ENCODE measurements at regions of chr20 and their contacts with region 1.

Region 1: DNA sequence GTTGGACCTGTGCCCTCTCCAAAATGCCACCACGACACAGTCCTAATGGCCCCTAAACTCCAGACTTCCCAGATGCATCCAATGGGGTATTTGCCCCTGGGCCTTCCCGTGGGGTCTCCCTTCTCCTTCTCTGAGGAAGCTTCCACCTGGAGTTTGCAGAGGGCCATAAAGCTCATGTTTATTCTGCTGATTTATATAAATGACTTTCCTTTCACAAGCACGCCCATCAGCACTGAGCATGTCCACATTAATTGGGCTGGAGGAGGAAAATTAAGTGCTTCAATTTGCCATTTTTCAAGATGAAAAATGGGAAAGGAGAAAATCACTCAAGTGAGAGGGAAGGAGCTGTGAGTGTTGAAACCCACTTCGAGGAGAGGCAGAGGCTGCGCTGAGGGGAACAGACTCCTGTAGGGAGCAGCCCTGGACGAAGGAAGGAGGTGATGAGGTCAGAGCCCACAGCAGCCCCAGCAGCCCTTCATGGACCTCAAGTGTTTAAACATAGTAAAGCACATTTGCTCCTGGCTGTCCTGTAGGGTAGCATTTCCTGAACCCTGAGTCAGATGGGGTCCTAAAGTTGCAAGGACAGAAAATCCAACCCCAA is 434.9 kb upstream of the SULF2 start:
- DNase-seq: no peak
- ATAC-seq: no peak
- H3K4me3 ChIP-seq: no peak overlapping the region
- H3K27ac ChIP-seq: no peak overlapping the region
- H3K4me1 ChIP-seq: no peaks in the 10 kb centered on the region
- H3K27me3 ChIP-seq: no peaks in the 10 kb centered on the region
- CTCF ChIP-seq: no peak

Region 2: DNA sequence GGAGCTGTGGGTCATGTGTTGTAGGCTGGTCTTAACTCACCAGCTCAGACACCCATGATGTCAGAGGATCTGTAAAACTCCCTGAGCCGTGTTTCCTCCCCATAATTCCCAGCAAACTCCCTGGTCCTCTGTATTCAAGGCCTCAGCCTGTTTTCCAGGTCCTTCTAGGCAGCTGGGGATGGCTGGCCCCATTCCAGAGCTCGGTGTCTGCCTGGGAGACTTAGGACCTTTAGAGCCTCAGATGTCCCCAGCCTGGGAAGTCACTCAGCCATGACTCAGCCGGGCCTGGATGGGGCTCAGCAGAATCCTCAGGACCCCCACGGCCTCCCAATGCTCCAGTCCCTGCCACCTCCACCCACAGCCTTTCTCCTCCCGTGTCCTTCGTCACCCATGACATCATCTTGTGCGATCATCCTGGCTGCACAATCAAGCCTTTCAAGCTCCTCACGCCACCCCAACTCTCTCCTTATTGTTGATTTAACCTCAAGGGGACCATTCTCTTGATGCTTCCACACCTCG is 40.2 kb after region 1 on chr20:
- CTCF ChIA-PET with region 1: no interaction called
- POLR2A ChIA-PET with region 1: no interaction called
- intact Hi-C with region 1: no loop called
- DNase-seq: no peak
- ATAC-seq: no peak
- H3K4me3 ChIP-seq: no peak overlapping the region
- H3K27ac ChIP-seq: no peak overlapping the region
- H3K4me1 ChIP-seq: no peaks in the 10 kb centered on the region
- H3K27me3 ChIP-seq: peaks cover 86% of the 10 kb centered on the region
- CTCF ChIP-seq: no peak

Region 3: DNA sequence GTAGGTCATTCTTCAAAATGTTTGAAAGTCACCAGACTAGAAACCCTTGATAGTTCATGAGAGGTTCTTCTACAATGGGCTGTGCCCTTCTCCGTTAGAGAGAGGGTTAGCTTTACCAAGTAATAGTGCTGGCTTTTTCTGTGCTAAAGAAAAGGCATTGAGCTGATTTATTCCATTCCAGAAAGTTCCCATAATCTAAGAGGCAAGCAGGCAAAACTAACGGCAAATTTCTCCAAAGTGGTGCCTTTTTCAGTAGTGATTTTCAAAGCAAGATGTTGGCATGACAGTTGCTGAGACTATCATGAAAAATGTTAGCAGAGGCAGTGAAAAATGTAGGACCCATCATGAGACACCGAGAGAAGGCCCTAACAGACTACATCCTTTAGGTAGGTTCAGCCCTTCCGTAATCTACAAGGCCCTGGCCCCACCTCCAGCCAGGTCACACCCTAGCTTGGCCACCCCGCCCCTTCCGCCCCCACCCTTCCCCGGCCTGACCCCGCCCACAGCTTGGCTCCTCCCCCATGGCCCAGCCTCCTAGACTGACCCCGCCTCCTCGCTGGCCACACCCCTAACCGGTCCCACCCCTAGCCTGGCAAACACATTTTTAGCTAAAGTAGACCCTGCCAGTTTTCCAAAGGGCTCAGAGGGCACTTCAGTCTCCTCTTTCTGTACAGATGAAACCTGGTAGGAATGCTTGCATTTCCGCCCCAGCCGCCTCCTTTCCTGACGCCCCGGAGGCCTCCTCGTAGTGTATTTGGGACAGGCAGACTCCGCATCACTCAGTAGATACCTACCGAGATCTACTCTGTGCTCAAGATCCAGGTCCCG is 163.9 kb after region 1 on chr20:
- CTCF ChIA-PET with region 1: no interaction called
- POLR2A ChIA-PET with region 1: no interaction called
- intact Hi-C with region 1: no loop called
- DNase-seq: no peak
- ATAC-seq: no peak
- H3K4me3 ChIP-seq: no peak overlapping the region
- H3K27ac ChIP-seq: no peak overlapping the region
- H3K4me1 ChIP-seq: no peaks in the 10 kb centered on the region
- H3K27me3 ChIP-seq: no peaks in the 10 kb centered on the region; the same call in none of the 2 replicates
- CTCF ChIP-seq: no peak

Region 4: DNA sequence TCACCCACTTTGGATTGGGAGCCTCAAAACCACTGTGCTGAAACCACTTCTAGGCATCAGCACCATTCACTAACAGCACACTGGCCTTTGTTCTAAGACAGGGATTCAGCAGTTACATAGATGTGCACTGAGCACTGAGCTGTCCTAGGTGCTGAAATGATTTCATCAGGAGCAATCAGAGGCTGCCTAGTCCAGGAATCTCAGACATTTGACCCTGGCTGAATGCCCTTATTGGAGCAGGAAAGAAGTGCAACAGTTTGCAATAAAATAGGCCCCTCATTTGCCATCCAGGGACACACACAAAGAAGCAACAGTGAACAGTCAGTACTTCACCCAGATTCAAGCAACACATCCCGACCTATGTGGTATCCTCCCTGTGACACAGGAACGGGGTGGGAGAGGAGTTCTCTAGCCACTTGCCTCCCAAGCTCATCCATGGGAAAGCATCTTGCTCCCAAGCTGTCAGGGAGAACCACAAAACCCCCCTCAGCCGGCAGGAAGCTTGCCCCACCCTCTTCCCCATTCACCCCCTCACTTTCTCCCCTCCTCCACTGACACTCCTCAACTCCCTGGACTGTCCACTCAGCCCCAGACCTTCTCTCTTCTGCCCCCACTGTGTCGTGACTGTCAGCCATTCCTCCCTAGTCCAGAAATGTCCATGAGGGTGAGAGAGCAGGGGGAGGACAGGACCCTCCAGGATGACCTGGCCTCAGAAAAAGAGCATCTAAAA is 303.2 kb after region 1 on chr20:
- CTCF ChIA-PET with region 1: no interaction called
- POLR2A ChIA-PET with region 1: interaction called, 11 read pairs
- intact Hi-C with region 1: no loop called
- DNase-seq: peak; percentile 73
- ATAC-seq: peak; percentile 79
- H3K4me3 ChIP-seq: no peak overlapping the region
- H3K27ac ChIP-seq: no peak overlapping the region
- H3K4me1 ChIP-seq: no peaks in the 10 kb centered on the region
- H3K27me3 ChIP-seq: peaks cover 55% of the 10 kb centered on the region
- CTCF ChIP-seq: no peak

Measured in PC-3 (cell line).